ENCODE measurements at regions of chr16 and their contacts with region 1.

Region 1: GRCh38 chr16:17578921-17579874 is 108.4 kb upstream of the XYLT1 start:
- DNase-seq: peak; percentile 21 to 62 (median 39)
- ATAC-seq: peak; percentile 84
- H3K4me3 ChIP-seq: no peak overlapping the region
- H3K4me3 Mint-ChIP-seq: no peak overlapping the region
- H3K27ac ChIP-seq: no peak overlapping the region
- H3K27ac Mint-ChIP-seq: no peak overlapping the region
- H3K4me1 ChIP-seq: no peaks in the 10 kb centered on the region
- H3K4me1 Mint-ChIP-seq: peaks cover 0 to 5% (median 0%) of the 10 kb centered on the region in 7 donors
- H3K27me3 ChIP-seq: no peaks in the 10 kb centered on the region
- H3K27me3 Mint-ChIP-seq: peaks cover 0 to 18% (median 8%) of the 10 kb centered on the region in 5 donors

Region 2: GRCh38 chr16:16861546-16861945 is 717.7 kb before region 1 on chr16:
- CTCF ChIA-PET with region 1: interaction called, 7 read pairs
- POLR2A ChIA-PET with region 1: interaction called, 3 read pairs
- intact Hi-C with region 1: loop called in 1 of 2 experiments (anchors 1 kb)
- DNase-seq: peak; percentile 15 to 63 (median 50)
- ATAC-seq: no peak
- H3K4me3 ChIP-seq: no peak overlapping the region
- H3K4me3 Mint-ChIP-seq: no peak overlapping the region
- H3K27ac ChIP-seq: no peak overlapping the region
- H3K27ac Mint-ChIP-seq: peak overlapping the region in 1 of 9 donors; percentile 13
- H3K4me1 ChIP-seq: no peaks in the 10 kb centered on the region
- H3K4me1 Mint-ChIP-seq: peaks cover 0 to 3% (median 0%) of the 10 kb centered on the region in 7 donors
- H3K27me3 ChIP-seq: no peaks in the 10 kb centered on the region
- H3K27me3 Mint-ChIP-seq: peaks cover 2 to 17% (median 10%) of the 10 kb centered on the region in 5 donors

Region 3: DNA sequence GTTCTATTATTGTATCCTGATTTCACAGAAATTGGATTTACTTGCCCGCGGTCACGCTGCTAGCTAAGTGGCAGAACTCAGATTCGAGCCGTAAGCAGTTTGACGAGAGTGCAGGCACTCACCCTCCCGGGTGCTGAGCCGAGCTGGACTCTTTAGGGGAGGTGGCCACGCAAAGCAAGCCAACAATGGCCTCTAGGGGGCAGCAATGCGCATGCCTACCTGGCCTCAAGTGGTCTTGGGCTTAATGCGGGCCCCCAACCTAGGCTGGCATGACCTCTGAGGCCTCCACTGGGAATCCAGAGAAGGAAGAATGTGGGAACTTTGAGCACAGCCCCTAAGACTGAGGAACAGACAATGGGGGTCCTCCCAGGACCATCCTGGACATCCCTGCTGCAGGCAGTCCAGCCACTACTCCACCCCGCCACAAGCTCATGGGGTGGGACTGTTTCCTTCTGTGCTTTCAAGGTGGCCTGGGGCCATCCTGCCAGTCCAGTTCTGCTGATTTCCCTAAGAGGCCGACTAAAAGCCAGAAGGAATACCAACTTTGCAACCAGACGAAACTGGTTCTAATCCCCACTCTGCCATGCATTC is 384.9 kb before region 1 on chr16:
- CTCF ChIA-PET with region 1: interaction called, 4 read pairs
- POLR2A ChIA-PET with region 1: no interaction called
- intact Hi-C with region 1: loop called in 1 of 2 experiments (anchors 1 kb)
- DNase-seq: peak; percentile 4 to 57 (median 28)
- ATAC-seq: peak; percentile 70
- H3K4me3 ChIP-seq: no peak overlapping the region
- H3K4me3 Mint-ChIP-seq: no peak overlapping the region
- H3K27ac ChIP-seq: no peak overlapping the region
- H3K27ac Mint-ChIP-seq: no peak overlapping the region
- H3K4me1 ChIP-seq: no peaks in the 10 kb centered on the region
- H3K4me1 Mint-ChIP-seq: peaks cover 0 to 13% (median 0%) of the 10 kb centered on the region in 7 donors
- H3K27me3 ChIP-seq: no peaks in the 10 kb centered on the region
- H3K27me3 Mint-ChIP-seq: no peaks in the 10 kb centered on the region

Region 4: DNA sequence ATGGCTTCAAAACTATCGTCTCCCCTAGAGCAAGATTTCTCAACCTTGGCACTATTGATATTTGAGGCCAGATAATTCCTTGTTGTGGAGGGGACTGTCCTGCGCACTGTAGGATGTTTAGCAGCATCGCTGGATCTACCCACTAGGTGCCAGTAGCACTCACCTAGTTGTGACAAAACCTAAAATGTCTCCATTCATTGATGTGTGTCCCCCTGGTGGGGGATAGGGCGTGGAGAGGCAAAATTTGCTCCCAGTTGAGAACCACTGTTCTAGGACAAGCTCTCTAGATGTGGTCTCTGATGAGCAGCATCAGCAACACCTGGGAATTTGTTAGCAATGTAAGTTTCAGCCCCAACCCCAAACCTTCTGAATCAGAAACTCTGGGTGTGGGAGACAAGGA is 367.4 kb before region 1 on chr16:
- CTCF ChIA-PET with region 1: interaction called, 3 read pairs
- POLR2A ChIA-PET with region 1: no interaction called
- intact Hi-C with region 1: loop called (anchors 2 to 10 kb)
- DNase-seq: peak in 8 of 9 donors; percentile 4 to 50 (median 34)
- ATAC-seq: peak; percentile 77
- H3K4me3 ChIP-seq: no peak overlapping the region
- H3K4me3 Mint-ChIP-seq: no peak overlapping the region
- H3K27ac ChIP-seq: no peak overlapping the region
- H3K27ac Mint-ChIP-seq: peak overlapping the region in 2 of 9 donors; percentile 21 to 91
- H3K4me1 ChIP-seq: peaks cover 0 to 7% of the 10 kb centered on the region in 2 donors
- H3K4me1 Mint-ChIP-seq: peaks cover 10 to 41% (median 30%) of the 10 kb centered on the region in 7 donors
- H3K27me3 ChIP-seq: no peaks in the 10 kb centered on the region
- H3K27me3 Mint-ChIP-seq: no peaks in the 10 kb centered on the region

Region 5: DNA sequence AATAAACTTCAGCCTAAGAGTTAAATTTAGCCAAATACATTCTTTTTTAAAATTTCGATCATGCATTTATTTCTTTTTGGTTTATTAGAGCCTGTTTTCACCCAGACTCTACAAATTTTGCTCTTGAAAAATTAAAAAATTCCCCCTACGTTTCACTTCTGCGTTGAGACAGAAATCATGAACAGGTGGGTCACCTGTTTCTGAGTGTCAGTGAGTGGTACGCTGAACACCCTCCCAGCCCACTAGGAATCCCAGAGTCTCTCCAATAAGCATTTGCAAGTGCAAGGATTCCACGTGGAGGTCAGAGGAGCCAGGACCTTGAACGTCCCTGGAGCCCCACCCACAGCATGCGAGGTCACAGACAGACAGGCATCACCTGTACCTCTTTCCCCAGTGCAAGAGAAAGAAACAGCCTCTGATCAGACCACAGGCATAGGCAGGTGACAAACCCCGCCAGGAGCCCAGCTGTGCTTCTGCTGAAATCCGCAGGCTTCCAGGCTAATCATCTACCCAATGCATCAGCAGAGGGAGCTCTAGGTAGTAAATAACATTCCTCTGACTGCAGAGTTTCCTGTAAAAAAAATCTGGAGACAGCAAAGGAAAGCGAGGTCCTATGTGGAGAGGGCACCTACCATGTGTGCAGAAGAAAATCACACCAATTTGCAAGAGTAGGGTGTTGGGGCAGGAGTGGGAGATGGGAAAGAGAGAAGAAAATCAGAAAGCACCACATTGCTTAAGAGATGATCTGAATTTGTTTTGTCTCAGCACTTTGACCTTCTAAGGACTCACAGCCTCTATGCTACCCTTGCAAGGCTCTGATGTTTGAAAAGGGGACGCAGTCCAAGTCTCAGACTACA is 102.6 kb before region 1 on chr16:
- CTCF ChIA-PET with region 1: no interaction called
- POLR2A ChIA-PET with region 1: no interaction called
- intact Hi-C with region 1: loop called (anchors 1 to 2 kb)
- DNase-seq: peak in 6 of 9 donors; percentile 36 to 56 (median 48)
- ATAC-seq: peak; percentile 80
- H3K4me3 ChIP-seq: no peak overlapping the region
- H3K4me3 Mint-ChIP-seq: peak overlapping the region in 1 of 10 donors; percentile 7
- H3K27ac ChIP-seq: no peak overlapping the region
- H3K27ac Mint-ChIP-seq: peak overlapping the region in 4 of 9 donors; percentile 10 to 50 (median 30)
- H3K4me1 ChIP-seq: peaks cover 10 to 13% of the 10 kb centered on the region in 2 donors
- H3K4me1 Mint-ChIP-seq: peaks cover 21 to 33% (median 28%) of the 10 kb centered on the region in 7 donors
- H3K27me3 ChIP-seq: no peaks in the 10 kb centered on the region
- H3K27me3 Mint-ChIP-seq: peaks cover 0 to 40% (median 7%) of the 10 kb centered on the region in 5 donors